K562 (cell line): ENCODE measurements at regions of chr7 and their contacts with region 1.

Region 1: DNA sequence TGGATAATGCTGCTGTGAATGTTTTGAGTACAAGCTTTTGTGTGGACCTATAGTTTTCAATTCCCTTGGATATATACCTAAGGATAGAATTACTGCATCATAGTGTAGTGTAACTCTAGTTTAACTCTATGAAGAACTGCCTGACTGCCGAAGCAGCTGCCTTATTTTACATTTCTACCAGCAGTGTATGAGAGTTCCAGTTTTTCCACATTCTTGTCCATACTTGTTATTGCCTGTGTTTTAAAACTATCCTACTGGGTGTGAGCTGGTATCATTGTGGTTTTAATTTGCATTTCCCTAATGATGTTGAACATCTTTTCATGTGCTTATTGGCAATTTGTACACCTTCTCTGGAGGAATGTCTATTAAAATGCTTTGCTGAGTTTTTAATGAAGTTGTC is 15.7 kb downstream of the SEPTIN7 start:
- DNase-seq: no peak
- ATAC-seq: no peak
- H3K4me3 ChIP-seq: no peak overlapping the region
- H3K27ac ChIP-seq: no peak overlapping the region
- H3K4me1 ChIP-seq: no peaks in the 10 kb centered on the region
- H3K27me3 ChIP-seq: no peaks in the 10 kb centered on the region
- CTCF ChIP-seq: no peak
- EP300 ChIP-seq: no peak
- POLR2A ChIP-seq: no peak
- RAD21 ChIP-seq: no peak

Region 2: DNA sequence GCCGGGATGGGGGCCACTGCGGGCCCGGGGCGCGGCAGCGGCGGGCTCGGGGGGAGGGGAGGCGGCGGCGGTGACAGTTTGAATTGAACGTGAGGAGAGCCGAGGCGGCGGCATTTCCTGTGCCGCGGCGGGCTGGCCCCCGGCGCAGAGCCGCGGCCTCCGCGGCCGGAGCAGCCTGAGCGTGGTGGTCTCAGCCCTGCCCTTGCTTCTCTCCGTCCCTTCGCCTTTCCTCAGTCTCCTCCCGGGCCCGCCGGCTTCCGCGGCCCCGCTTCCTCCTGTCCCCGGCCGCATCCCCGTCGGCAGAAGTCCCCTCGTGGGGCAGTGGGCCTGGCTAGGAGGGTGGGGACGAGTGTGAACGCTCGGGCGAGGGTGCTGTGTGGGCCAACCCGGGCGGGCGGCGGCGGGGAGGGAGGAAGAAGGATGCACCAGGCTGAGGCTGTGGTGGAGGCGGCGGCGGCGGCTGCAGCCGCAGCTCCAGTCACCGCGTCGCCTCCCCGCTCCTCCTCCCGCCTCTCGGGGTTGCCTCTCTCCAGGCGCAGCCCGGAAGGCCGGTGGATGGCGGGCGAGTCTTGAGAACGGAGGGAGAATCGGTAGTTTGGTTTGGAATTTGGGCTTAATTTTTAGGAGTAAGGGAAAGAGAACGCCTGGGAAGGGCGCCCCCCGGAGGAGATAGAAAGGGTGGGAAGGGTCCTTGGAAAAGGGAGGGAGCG is 15.0 kb before region 1 on chr7:
- CTCF ChIA-PET with region 1: no interaction called
- POLR2A ChIA-PET with region 1: interaction called, 22 read pairs
- in situ Hi-C with region 1: no loop called
- intact Hi-C with region 1: no loop called
- DNase-seq: peak; percentile 48 to 68 (median 56)
- ATAC-seq: peak; percentile 73
- H3K4me3 ChIP-seq: peak overlapping the region; percentile 93
- H3K27ac ChIP-seq: peak overlapping the region; percentile 97
- H3K4me1 ChIP-seq: peaks cover 3 to 12% of the 10 kb centered on the region in 2 experiments; a peak in 3 of 5 replicates
- H3K27me3 ChIP-seq: no peaks in the 10 kb centered on the region
- CTCF ChIP-seq: peak; percentile 45 to 62 (median 60); a peak in 5 of 6 replicates
- EP300 ChIP-seq: no peak
- POLR2A ChIP-seq: no peak
- RAD21 ChIP-seq: peak; percentile 38 to 51; a peak in 3 of 4 replicates

Region 3: GRCh38 chr7:36207451-36208291 is 391.2 kb after region 1 on chr7:
- CTCF ChIA-PET with region 1: no interaction called
- POLR2A ChIA-PET with region 1: no interaction called
- in situ Hi-C with region 1: no loop called
- intact Hi-C with region 1: no loop called
- DNase-seq: no peak
- ATAC-seq: peak; percentile 53
- H3K4me3 ChIP-seq: no peak overlapping the region
- H3K27ac ChIP-seq: no peak overlapping the region
- H3K4me1 ChIP-seq: peaks cover 6 to 25% of the 10 kb centered on the region in 2 experiments; a peak in 4 of 5 replicates
- H3K27me3 ChIP-seq: peaks cover 0 to 10% of the 10 kb centered on the region in 2 experiments; a peak in 1 of 5 replicates
- CTCF ChIP-seq: no peak
- EP300 ChIP-seq: no peak
- POLR2A ChIP-seq: no peak
- RAD21 ChIP-seq: no peak